CD8-positive, alpha-beta memory T cell (primary cell): ENCODE measurements at regions of chr11 and their contacts with region 1.

Region 1: DNA sequence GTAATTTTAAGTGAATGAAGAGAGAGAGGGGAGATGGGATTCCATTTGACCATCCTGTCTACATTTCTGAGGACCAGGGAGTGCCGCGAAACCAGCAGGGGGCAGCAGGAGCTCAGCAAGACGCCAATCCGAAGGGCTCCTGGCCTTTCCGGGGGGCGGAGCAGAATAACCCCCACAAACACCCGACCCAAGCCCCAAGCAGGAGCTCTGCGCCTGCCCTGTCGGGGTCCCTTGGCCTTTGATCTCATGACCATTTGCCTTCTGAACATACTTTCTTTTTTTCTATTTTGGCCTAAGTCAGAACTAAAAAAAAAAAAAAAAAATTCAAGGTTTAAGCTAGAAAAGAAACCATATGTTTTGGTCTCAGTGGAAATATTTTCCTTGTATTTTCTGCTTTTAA is 21.9 kb upstream of the SCN2B start:
- DNase-seq: peak; percentile 65 to 88 (median 79)
- H3K4me3 ChIP-seq: no peak overlapping the region
- H3K4me3 Mint-ChIP-seq: peak overlapping the region in 4 of 7 donors; percentile 41 to 60 (median 52)
- H3K27ac ChIP-seq: no peak overlapping the region
- H3K27ac Mint-ChIP-seq: peak overlapping the region; percentile 68 to 90 (median 79)
- H3K4me1 ChIP-seq: peaks cover 41% of the 10 kb centered on the region
- H3K4me1 Mint-ChIP-seq: peaks cover 12 to 18% (median 12%) of the 10 kb centered on the region in 3 donors
- H3K27me3 ChIP-seq: no peaks in the 10 kb centered on the region
- H3K27me3 Mint-ChIP-seq: peaks cover 0 to 1% of the 10 kb centered on the region in 2 donors

Region 2: GRCh38 chr11:118068206-118068944 is 130.0 kb before region 1 on chr11:
- CTCF ChIA-PET with region 1: no interaction called
- POLR2A ChIA-PET with region 1: no interaction called
- DNase-seq: no peak
- H3K4me3 ChIP-seq: no peak overlapping the region
- H3K4me3 Mint-ChIP-seq: no peak overlapping the region
- H3K27ac ChIP-seq: no peak overlapping the region
- H3K27ac Mint-ChIP-seq: no peak overlapping the region
- H3K4me1 ChIP-seq: no peaks in the 10 kb centered on the region
- H3K4me1 Mint-ChIP-seq: peaks cover 4 to 5% (median 5%) of the 10 kb centered on the region in 3 donors
- H3K27me3 ChIP-seq: no peaks in the 10 kb centered on the region
- H3K27me3 Mint-ChIP-seq: peaks cover 6 to 30% of the 10 kb centered on the region in 2 donors

Region 3: DNA sequence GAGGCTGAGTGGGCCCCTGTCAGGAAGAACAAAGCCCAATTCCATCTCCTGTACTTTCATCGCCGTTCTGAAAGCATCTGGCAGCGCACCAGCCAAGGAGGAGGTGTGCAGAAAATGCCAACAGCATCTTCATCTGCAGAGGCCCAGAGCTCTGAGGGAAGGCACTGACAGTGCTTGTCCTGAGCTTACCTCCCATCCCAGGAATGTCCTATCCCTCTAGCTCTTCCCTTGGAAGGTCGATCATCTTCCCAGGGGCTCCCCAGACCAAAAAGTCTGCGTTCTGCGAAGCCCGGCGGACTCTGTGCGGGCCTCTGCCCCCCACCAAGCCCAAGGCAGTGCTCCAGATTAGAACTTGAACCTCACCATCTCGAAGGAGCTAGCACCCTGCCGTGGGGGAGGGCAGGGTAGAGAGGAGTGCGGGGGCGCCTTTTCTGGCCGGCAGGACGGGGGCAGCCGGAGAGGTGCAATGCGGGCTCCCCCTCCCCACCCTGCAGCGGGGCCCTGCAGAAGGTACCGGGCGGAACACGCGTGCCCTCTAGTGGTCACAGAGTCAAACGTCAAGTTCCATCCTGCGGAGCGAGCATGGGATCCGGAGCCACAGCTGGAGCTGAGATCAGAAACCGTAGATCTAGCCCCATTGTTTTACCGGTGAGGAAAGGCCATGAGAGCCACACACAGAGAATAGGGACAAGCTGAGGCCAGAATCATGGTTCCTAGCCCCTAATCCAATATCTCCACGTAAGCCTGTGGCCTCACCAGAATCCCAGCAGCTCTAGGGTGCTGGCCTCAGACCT is 26.9 kb before region 1 on chr11:
- CTCF ChIA-PET with region 1: interaction called, 13 read pairs
- POLR2A ChIA-PET with region 1: no interaction called
- DNase-seq: peak; percentile 51 to 76 (median 62)
- H3K4me3 ChIP-seq: no peak overlapping the region
- H3K4me3 Mint-ChIP-seq: no peak overlapping the region
- H3K27ac ChIP-seq: no peak overlapping the region
- H3K27ac Mint-ChIP-seq: peak overlapping the region in 1 of 8 donors; percentile 19
- H3K4me1 ChIP-seq: peaks cover 8% of the 10 kb centered on the region
- H3K4me1 Mint-ChIP-seq: peaks cover 0 to 4% (median 4%) of the 10 kb centered on the region in 3 donors
- H3K27me3 ChIP-seq: no peaks in the 10 kb centered on the region
- H3K27me3 Mint-ChIP-seq: peaks cover 11 to 22% of the 10 kb centered on the region in 2 donors

Region 4: GRCh38 chr11:118227865-118228785 is 29.8 kb after region 1 on chr11:
- CTCF ChIA-PET with region 1: interaction called, 19 read pairs
- POLR2A ChIA-PET with region 1: interaction called, 8 read pairs
- DNase-seq: peak in 2 of 5 donors; percentile 67
- H3K4me3 ChIP-seq: no peak overlapping the region
- H3K4me3 Mint-ChIP-seq: peak overlapping the region in 5 of 7 donors; percentile 65 to 89 (median 76)
- H3K27ac ChIP-seq: peak overlapping the region; percentile 26
- H3K27ac Mint-ChIP-seq: peak overlapping the region in 3 of 8 donors; percentile 78 to 97 (median 97)
- H3K4me1 ChIP-seq: peaks cover 67% of the 10 kb centered on the region
- H3K4me1 Mint-ChIP-seq: peaks cover 0 to 51% (median 9%) of the 10 kb centered on the region in 3 donors
- H3K27me3 ChIP-seq: no peaks in the 10 kb centered on the region
- H3K27me3 Mint-ChIP-seq: no peaks in the 10 kb centered on the region

Region 5: GRCh38 chr11:118247047-118247446 is 48.7 kb after region 1 on chr11:
- CTCF ChIA-PET with region 1: interaction called, 18 read pairs
- POLR2A ChIA-PET with region 1: interaction called, 10 read pairs
- DNase-seq: no peak
- H3K4me3 ChIP-seq: no peak overlapping the region
- H3K4me3 Mint-ChIP-seq: peak overlapping the region in 6 of 7 donors; percentile 0 to 58 (median 18)
- H3K27ac ChIP-seq: peak overlapping the region; percentile 20
- H3K27ac Mint-ChIP-seq: peak overlapping the region; percentile 51 to 94 (median 89)
- H3K4me1 ChIP-seq: peaks cover 35% of the 10 kb centered on the region
- H3K4me1 Mint-ChIP-seq: peaks cover 70 to 90% (median 88%) of the 10 kb centered on the region in 3 donors
- H3K27me3 ChIP-seq: no peaks in the 10 kb centered on the region
- H3K27me3 Mint-ChIP-seq: peaks cover 0 to 2% of the 10 kb centered on the region in 2 donors

Region 6: DNA sequence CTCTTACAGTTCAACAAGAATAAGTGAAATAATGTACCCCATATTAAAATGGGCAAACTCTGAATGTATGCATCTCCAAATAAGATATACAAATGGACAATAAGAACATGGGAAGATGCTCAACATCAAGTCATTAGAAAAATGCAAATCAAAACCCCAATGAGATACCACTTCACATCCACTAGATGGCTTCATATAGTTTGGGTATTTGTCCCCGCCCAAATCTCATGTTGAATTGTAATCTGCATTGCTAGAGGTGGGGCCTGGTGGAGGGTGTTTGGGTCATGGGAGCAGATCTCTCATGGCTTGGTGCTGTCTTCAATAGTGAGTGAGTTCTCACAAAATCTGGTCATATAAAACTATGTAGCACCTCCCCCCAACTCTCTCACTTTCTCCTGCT is 60.0 kb after region 1 on chr11:
- CTCF ChIA-PET with region 1: interaction called, 18 read pairs
- POLR2A ChIA-PET with region 1: interaction called, 4 read pairs
- DNase-seq: no peak
- H3K4me3 ChIP-seq: no peak overlapping the region
- H3K4me3 Mint-ChIP-seq: no peak overlapping the region
- H3K27ac ChIP-seq: no peak overlapping the region
- H3K27ac Mint-ChIP-seq: peak overlapping the region in 1 of 8 donors; percentile 57
- H3K4me1 ChIP-seq: peaks cover 8% of the 10 kb centered on the region
- H3K4me1 Mint-ChIP-seq: peaks cover 13 to 24% (median 22%) of the 10 kb centered on the region in 3 donors
- H3K27me3 ChIP-seq: no peaks in the 10 kb centered on the region
- H3K27me3 Mint-ChIP-seq: peaks cover 0 to 10% of the 10 kb centered on the region in 2 donors

Region 7: DNA sequence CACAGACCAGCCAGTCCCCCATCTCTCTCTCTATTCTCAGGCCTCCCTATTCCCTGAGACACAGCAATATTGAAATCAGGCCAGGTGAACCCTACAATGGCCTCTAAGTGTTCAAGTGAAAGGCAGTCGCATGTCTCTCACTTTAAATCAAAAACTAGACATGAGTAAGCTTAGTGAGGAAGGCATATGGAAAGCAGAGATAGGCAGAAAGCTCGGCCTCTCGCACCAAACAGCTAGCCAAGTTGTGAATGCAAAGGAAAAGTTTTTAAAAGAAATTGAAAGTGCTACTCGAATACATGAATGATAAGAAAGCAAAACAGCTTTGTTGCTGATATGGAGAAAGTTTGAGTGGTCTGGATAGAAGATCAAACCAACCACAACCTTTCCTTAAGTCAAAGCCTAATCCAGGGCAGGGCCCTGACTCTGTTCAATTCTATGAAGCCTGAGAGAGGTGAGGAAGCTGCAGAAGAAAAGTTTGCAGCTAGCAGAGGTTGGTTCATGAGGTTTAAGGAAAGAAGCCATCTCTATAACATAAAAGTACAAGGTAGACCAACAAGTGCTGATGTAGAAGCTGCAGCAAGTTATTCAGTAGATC is 85.5 kb after region 1 on chr11:
- CTCF ChIA-PET with region 1: interaction called, 18 read pairs
- POLR2A ChIA-PET with region 1: interaction called, 3 read pairs
- DNase-seq: no peak
- H3K4me3 ChIP-seq: no peak overlapping the region
- H3K4me3 Mint-ChIP-seq: no peak overlapping the region
- H3K27ac ChIP-seq: no peak overlapping the region
- H3K27ac Mint-ChIP-seq: peak overlapping the region in 7 of 8 donors; percentile 13 to 83 (median 38)
- H3K4me1 ChIP-seq: peaks cover 13% of the 10 kb centered on the region
- H3K4me1 Mint-ChIP-seq: peaks cover 13 to 23% (median 17%) of the 10 kb centered on the region in 3 donors
- H3K27me3 ChIP-seq: no peaks in the 10 kb centered on the region
- H3K27me3 Mint-ChIP-seq: no peaks in the 10 kb centered on the region

Region 8: GRCh38 chr11:118295834-118296454 is 97.6 kb after region 1 on chr11:
- CTCF ChIA-PET with region 1: interaction called, 25 read pairs
- POLR2A ChIA-PET with region 1: interaction called, 11 read pairs
- DNase-seq: peak in 3 of 5 donors; percentile 45 to 68 (median 53)
- H3K4me3 ChIP-seq: no peak overlapping the region
- H3K4me3 Mint-ChIP-seq: no peak overlapping the region
- H3K27ac ChIP-seq: no peak overlapping the region
- H3K27ac Mint-ChIP-seq: peak overlapping the region; percentile 34 to 85 (median 74)
- H3K4me1 ChIP-seq: peaks cover 8% of the 10 kb centered on the region
- H3K4me1 Mint-ChIP-seq: peaks cover 12 to 20% (median 17%) of the 10 kb centered on the region in 3 donors
- H3K27me3 ChIP-seq: no peaks in the 10 kb centered on the region
- H3K27me3 Mint-ChIP-seq: no peaks in the 10 kb centered on the region